GM10248 (cell line): ENCODE measurements at regions of chr1 and their contacts with region 1.

Region 1: GRCh38 chr1:205983925-205984725 is 19.1 kb downstream of the RAB7B start:
- DNase-seq: peak; percentile 71
- CTCF ChIP-seq: peak; percentile 82

Region 2: GRCh38 chr1:205729945-205730610 is 254.0 kb before region 1 on chr1:
- CTCF ChIA-PET with region 1: no interaction called
- POLR2A ChIA-PET with region 1: no interaction called
- DNase-seq: no peak
- CTCF ChIP-seq: no peak

Region 3: GRCh38 chr1:206001476-206001888 is 17.4 kb after region 1 on chr1:
- CTCF ChIA-PET with region 1: interaction called, 41 read pairs
- POLR2A ChIA-PET with region 1: no interaction called
- DNase-seq: no peak
- CTCF ChIP-seq: no peak

Region 4: DNA sequence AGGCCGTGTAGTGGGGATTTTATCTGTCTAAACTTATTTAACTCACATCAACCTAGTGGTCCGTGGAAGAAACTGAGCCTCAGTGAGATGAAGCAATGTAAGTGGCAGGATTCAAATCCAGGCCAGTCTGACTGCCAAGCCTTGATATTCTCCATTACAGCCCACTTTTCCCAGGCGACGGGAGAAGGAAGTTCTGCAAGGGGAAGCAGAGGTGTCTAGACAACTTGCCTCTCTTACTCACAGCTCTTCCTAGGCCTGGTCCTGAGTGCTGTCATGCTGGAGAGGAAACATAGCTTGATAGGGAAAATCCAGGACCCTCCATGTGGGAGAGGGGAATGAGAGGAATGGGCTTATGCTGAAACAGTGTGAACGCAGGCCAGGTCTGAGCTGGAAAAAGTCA is 30.5 kb after region 1 on chr1:
- CTCF ChIA-PET with region 1: no interaction called
- POLR2A ChIA-PET with region 1: no interaction called
- DNase-seq: no peak
- CTCF ChIP-seq: no peak